Naive thymus-derived CD4-positive, alpha-beta T cell (primary cell): ENCODE measurements at regions of chr11 and their contacts with region 1.

Region 1: DNA sequence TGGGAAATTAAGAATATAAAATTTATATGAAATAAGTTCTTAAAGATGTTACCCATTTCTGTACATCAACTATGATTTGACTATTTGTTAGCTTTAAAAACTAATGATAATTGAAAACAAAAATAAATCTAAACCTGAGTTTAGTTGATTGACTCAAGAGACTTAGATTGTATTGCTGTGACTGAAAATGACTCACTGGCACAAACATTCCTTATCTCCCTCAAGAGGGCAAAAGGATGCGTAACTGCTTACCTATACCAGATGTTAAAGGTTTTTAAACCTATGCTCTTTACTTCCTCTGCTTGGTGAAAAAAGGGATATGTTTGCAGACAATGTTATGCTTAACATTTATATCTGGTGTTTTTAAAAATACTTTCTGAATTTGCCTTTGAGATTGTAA is 30.3 kb downstream of the ATM start:
- DNase-seq: peak in 2 of 9 donors; percentile 16 to 35
- ATAC-seq: no peak
- H3K4me3 ChIP-seq: no peak overlapping the region
- H3K4me3 Mint-ChIP-seq: peak overlapping the region in 1 of 10 donors; percentile 23
- H3K27ac ChIP-seq: peak overlapping the region; percentile 28
- H3K27ac Mint-ChIP-seq: peak overlapping the region in 6 of 9 donors; percentile 48 to 83 (median 73)
- H3K4me1 ChIP-seq: peaks cover 9 to 13% of the 10 kb centered on the region in 2 donors
- H3K4me1 Mint-ChIP-seq: peaks cover 14 to 91% (median 74%) of the 10 kb centered on the region in 7 donors
- H3K27me3 ChIP-seq: no peaks in the 10 kb centered on the region
- H3K27me3 Mint-ChIP-seq: no peaks in the 10 kb centered on the region

Region 2: DNA sequence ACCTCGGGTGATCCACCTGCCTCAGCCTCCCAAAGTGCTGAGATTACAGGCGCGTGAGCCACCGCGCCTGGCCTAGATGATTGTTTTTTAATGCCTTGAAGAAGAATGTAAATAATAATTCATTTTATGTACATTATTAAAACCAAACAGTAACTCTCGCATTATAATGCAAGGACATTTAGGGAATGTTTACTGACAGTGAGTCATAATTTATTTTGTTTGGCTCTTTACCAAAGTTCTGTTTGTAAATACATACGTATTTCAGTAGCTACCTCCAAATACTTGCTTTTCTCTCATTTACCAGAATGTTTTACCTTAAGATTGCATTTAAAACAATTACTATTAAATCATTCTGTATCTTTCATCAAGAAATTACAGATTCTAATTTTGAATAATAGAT is 322.0 kb before region 1 on chr11:
- CTCF ChIA-PET with region 1: no interaction called
- POLR2A ChIA-PET with region 1: no interaction called
- intact Hi-C with region 1: no loop called
- DNase-seq: no peak
- ATAC-seq: no peak
- H3K4me3 ChIP-seq: no peak overlapping the region
- H3K4me3 Mint-ChIP-seq: no peak overlapping the region
- H3K27ac ChIP-seq: no peak overlapping the region
- H3K27ac Mint-ChIP-seq: no peak overlapping the region
- H3K4me1 ChIP-seq: peaks cover 6 to 7% of the 10 kb centered on the region in 2 donors
- H3K4me1 Mint-ChIP-seq: peaks cover 5 to 13% (median 11%) of the 10 kb centered on the region in 7 donors
- H3K27me3 ChIP-seq: peaks cover 0 to 8% of the 10 kb centered on the region in 2 donors
- H3K27me3 Mint-ChIP-seq: peaks cover 26 to 47% (median 32%) of the 10 kb centered on the region in 5 donors

Region 3: DNA sequence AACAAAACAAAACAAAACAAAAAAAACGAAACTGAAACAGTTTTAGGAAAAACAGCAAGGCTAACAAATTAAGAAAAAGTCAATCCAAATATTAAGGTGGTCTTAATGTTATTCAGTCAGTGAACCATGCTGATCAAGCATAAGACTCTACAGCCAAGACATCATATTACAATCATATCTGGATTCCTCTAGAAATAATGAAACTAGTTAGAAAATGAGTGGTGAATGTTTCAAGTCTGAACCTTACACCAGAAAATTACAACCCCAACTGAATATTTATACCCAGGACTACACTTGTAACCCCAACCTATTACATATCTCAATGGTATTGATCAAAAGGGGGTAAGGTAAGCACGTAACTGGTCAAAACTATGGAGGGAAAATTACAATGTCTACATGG is 83.0 kb before region 1 on chr11:
- CTCF ChIA-PET with region 1: no interaction called
- POLR2A ChIA-PET with region 1: no interaction called
- intact Hi-C with region 1: loop called in 1 of 2 experiments (anchors 5 kb)
- DNase-seq: no peak
- ATAC-seq: no peak
- H3K4me3 ChIP-seq: no peak overlapping the region
- H3K4me3 Mint-ChIP-seq: peak overlapping the region in 1 of 10 donors; percentile 3
- H3K27ac ChIP-seq: no peak overlapping the region
- H3K27ac Mint-ChIP-seq: peak overlapping the region; percentile 50 to 92 (median 76)
- H3K4me1 ChIP-seq: no peaks in the 10 kb centered on the region
- H3K4me1 Mint-ChIP-seq: peaks cover 16 to 47% (median 25%) of the 10 kb centered on the region in 7 donors
- H3K27me3 ChIP-seq: no peaks in the 10 kb centered on the region
- H3K27me3 Mint-ChIP-seq: no peaks in the 10 kb centered on the region

Region 4: DNA sequence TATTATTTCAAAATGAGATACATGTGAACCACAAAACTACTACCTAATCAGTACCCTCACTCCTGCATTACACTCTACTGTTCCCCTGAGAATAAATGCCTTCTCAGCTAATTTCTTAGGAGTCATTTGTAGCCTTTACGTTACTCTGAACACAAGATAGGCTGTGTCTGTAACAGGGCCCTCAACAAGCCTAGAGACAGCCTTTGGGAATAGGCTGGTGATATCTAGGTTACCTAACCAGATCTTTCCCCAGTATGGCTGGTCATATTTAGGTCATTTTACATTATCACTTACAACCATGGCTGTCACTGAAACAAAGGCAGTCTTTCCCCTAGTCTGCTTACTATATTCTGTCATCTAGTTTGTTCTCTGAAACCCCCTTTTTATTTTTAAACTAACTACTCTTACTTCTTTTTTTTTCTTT is 16.1 kb before region 1 on chr11:
- CTCF ChIA-PET with region 1: interaction called, 13 read pairs
- POLR2A ChIA-PET with region 1: interaction called, 66 read pairs
- intact Hi-C with region 1: loop called in 1 of 2 experiments (anchors 1 kb)
- DNase-seq: peak in 4 of 9 donors; percentile 31 to 63 (median 50)
- ATAC-seq: peak; percentile 51
- H3K4me3 ChIP-seq: peak overlapping the region; percentile 50
- H3K4me3 Mint-ChIP-seq: peak overlapping the region in 9 of 10 donors; percentile 54 to 89 (median 82)
- H3K27ac ChIP-seq: peak overlapping the region; percentile 74
- H3K27ac Mint-ChIP-seq: peak overlapping the region in 7 of 9 donors; percentile 81 to 97 (median 95)
- H3K4me1 ChIP-seq: peaks cover 75 to 94% of the 10 kb centered on the region in 2 donors
- H3K4me1 Mint-ChIP-seq: peaks cover 53 to 95% (median 79%) of the 10 kb centered on the region in 7 donors
- H3K27me3 ChIP-seq: no peaks in the 10 kb centered on the region
- H3K27me3 Mint-ChIP-seq: no peaks in the 10 kb centered on the region

Region 5: GRCh38 chr11:108269583-108269982 is 16.4 kb after region 1 on chr11:
- CTCF ChIA-PET with region 1: no interaction called
- POLR2A ChIA-PET with region 1: no interaction called
- intact Hi-C with region 1: loop called in 1 of 2 experiments (anchors 2 kb)
- DNase-seq: no peak
- ATAC-seq: no peak
- H3K4me3 ChIP-seq: no peak overlapping the region
- H3K4me3 Mint-ChIP-seq: no peak overlapping the region
- H3K27ac ChIP-seq: no peak overlapping the region
- H3K27ac Mint-ChIP-seq: peak overlapping the region in 8 of 9 donors; percentile 5 to 84 (median 70)
- H3K4me1 ChIP-seq: no peaks in the 10 kb centered on the region
- H3K4me1 Mint-ChIP-seq: peaks cover 5 to 46% (median 38%) of the 10 kb centered on the region in 7 donors
- H3K27me3 ChIP-seq: no peaks in the 10 kb centered on the region
- H3K27me3 Mint-ChIP-seq: no peaks in the 10 kb centered on the region

Region 6: DNA sequence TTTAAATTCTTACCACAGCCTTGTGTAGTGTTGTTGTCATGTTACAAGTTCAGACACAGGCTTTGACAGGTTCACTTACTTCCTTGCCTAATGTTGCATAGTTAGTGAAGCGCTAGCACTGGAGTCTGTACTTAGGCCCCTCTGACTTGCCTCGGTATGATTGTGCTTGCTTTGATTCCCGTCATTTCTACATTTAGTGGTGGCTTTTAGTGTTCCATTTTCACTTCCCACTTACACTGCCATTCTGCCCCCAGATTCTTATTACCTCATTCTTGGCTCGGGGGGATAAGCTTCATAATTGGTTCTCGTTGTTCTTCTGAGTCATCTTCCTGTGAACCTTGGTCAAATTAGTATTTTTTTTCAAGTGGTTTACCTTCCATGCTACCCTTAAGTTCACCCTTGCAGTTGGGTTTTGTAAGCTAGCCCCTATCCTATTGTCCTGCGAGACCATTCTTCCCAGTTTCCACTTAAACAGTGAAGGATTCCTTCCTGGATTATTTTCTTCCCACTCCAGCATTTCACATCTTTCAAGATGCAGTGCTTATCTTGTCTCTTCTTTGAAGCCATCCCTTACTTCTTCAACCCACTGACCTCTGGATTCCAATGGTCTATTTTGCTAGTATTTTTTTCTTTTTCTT is 480.4 kb after region 1 on chr11:
- CTCF ChIA-PET with region 1: no interaction called
- POLR2A ChIA-PET with region 1: no interaction called
- intact Hi-C with region 1: no loop called
- DNase-seq: peak in 1 of 9 donors; percentile 27
- ATAC-seq: peak; percentile 65
- H3K4me3 ChIP-seq: no peak overlapping the region
- H3K4me3 Mint-ChIP-seq: peak overlapping the region in 4 of 10 donors; percentile 4 to 61 (median 6)
- H3K27ac ChIP-seq: no peak overlapping the region
- H3K27ac Mint-ChIP-seq: peak overlapping the region in 3 of 9 donors; percentile 0 to 59 (median 2)
- H3K4me1 ChIP-seq: peaks cover 0 to 5% of the 10 kb centered on the region in 2 donors
- H3K4me1 Mint-ChIP-seq: peaks cover 18 to 54% (median 43%) of the 10 kb centered on the region in 7 donors
- H3K27me3 ChIP-seq: no peaks in the 10 kb centered on the region
- H3K27me3 Mint-ChIP-seq: no peaks in the 10 kb centered on the region